ENCODE measurements at regions of chr21 and their contacts with region 1.

Region 1: GRCh38 chr21:14438211-14438610 is 55.3 kb upstream of the HSPA13 start:
- DNase-seq: peak; percentile 10
- H3K4me3 ChIP-seq: no peak overlapping the region
- H3K27ac ChIP-seq: no peak overlapping the region
- H3K4me1 ChIP-seq: no peaks in the 10 kb centered on the region
- H3K27me3 ChIP-seq: no peaks in the 10 kb centered on the region; the same call in 1 of the 2 replicates

Region 2: GRCh38 chr21:14236180-14236579 is 202.0 kb before region 1 on chr21:
- in situ Hi-C with region 1: no loop called
- DNase-seq: no peak
- H3K4me3 ChIP-seq: no peak overlapping the region
- H3K27ac ChIP-seq: no peak overlapping the region
- H3K4me1 ChIP-seq: no peaks in the 10 kb centered on the region
- H3K27me3 ChIP-seq: no peaks in the 10 kb centered on the region

Region 3: GRCh38 chr21:15084668-15085067 is 646.5 kb after region 1 on chr21:
- in situ Hi-C with region 1: loop called (anchors 25 kb)
- DNase-seq: no peak
- H3K4me3 ChIP-seq: no peak overlapping the region
- H3K27ac ChIP-seq: no peak overlapping the region
- H3K4me1 ChIP-seq: no peaks in the 10 kb centered on the region
- H3K27me3 ChIP-seq: no peaks in the 10 kb centered on the region